Ovary (tissue), 10 donors: ENCODE measurements at regions of chr1 and their contacts with region 1.

Region 1: DNA sequence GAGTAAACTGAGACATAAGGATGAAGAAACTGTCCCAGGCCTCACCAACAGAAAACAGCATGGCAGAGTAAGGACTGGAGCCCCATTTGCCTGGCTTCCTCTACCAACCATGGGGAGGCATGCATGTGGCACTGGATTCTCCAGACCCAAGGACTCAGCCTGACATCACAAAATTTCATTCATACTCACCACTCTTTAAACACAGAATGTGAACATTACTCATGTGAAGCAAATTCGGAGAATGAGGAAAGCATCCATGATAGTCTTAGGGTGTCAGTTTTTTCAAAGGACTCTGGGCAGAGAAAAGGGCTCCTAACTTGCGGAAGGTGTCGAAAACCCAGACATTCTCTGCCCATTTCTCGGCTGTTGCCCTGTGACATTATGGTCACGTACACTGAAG is 83.9 kb downstream of the PCNX2 start:
- DNase-seq: no peak
- H3K4me3 ChIP-seq: no peak overlapping the region
- H3K27ac ChIP-seq: no peak overlapping the region
- H3K4me1 ChIP-seq: no peaks in the 10 kb centered on the region
- H3K27me3 ChIP-seq: no peaks in the 10 kb centered on the region
- CTCF ChIP-seq: no peak
- EP300 ChIP-seq: no peak
- POLR2A ChIP-seq: no peak

Region 2: GRCh38 chr1:233157245-233157644 is 54.4 kb before region 1 on chr1:
- intact Hi-C with region 1: no loop called
- DNase-seq: no peak
- H3K4me3 ChIP-seq: no peak overlapping the region
- H3K27ac ChIP-seq: no peak overlapping the region
- H3K4me1 ChIP-seq: no peaks in the 10 kb centered on the region
- H3K27me3 ChIP-seq: no peaks in the 10 kb centered on the region
- CTCF ChIP-seq: no peak
- EP300 ChIP-seq: no peak
- POLR2A ChIP-seq: no peak

Region 3: GRCh38 chr1:233182587-233182986 is 29.0 kb before region 1 on chr1:
- intact Hi-C with region 1: loop called in 1 of 4 experiments (anchors 1 kb)
- DNase-seq: no peak
- H3K4me3 ChIP-seq: no peak overlapping the region
- H3K27ac ChIP-seq: no peak overlapping the region
- H3K4me1 ChIP-seq: no peaks in the 10 kb centered on the region
- H3K27me3 ChIP-seq: no peaks in the 10 kb centered on the region
- CTCF ChIP-seq: no peak
- EP300 ChIP-seq: no peak
- POLR2A ChIP-seq: no peak

Region 4: GRCh38 chr1:234163267-234163919 is 951.8 kb after region 1 on chr1:
- intact Hi-C with region 1: no loop called
- DNase-seq: no peak
- H3K4me3 ChIP-seq: no peak overlapping the region
- H3K27ac ChIP-seq: no peak overlapping the region
- H3K4me1 ChIP-seq: no peaks in the 10 kb centered on the region
- H3K27me3 ChIP-seq: no peaks in the 10 kb centered on the region
- CTCF ChIP-seq: no peak
- EP300 ChIP-seq: no peak
- POLR2A ChIP-seq: no peak